Pancreas (tissue), 10 donors: ENCODE measurements at regions of chr16 and their contacts with region 1.

Region 1: DNA sequence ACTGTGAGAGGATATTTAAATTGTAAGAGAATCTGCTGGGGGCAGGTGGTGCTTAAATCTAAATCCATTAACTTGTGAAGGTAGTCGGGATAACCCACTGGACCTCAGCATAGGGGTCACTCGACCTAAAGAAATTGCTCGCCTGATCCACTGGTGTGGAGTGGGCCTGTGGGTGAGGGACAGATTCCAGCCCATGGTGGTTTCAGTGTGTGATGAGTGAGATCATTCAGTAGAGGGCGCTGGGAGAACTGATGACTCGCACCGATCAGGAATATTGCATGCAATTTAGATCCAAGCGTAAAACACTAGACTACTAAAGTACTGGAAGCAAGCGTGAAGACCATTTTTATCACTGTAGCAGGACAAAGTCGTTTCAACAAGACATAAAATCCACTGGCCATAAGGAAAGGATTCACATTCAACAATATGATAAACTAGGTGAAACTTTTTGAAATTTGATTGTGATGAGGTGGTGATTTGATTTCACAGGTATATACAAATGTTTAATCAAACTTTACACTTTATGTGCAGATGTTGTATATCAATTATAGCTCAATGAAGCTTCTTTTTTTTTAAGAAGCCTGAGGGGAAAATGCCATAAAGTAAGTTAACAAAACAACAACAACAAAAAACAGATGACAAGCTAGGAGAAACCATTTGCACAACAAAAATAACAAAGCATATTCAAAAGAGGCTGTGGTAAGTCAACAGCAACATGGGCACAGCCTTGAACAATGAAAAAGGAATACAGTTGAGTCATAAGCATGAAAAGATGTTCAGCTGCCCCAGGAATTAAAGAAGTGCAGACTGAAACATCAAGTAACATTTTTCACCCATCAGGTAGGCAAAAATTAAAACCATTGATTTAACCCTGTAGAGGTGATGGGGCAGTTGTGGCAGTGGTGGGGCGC is 7.5 kb upstream of the TMEM170A start:
- DNase-seq: peak in 4 of 6 donors; percentile 37 to 66 (median 41)
- ATAC-seq: peak; percentile 85 to 99 (median 98)
- H3K4me3 ChIP-seq: no peak overlapping the region
- H3K27ac ChIP-seq: no peak overlapping the region
- H3K4me1 ChIP-seq: no peaks in the 10 kb centered on the region
- H3K27me3 ChIP-seq: no peaks in the 10 kb centered on the region
- CTCF ChIP-seq: peak in 3 of 4 donors; percentile 41 to 62 (median 60)

Region 2: GRCh38 chr16:75519881-75520280 is 47.9 kb after region 1 on chr16:
- intact Hi-C with region 1: no loop called
- DNase-seq: no peak
- ATAC-seq: no peak
- H3K4me3 ChIP-seq: no peak overlapping the region
- H3K27ac ChIP-seq: no peak overlapping the region
- H3K4me1 ChIP-seq: no peaks in the 10 kb centered on the region
- H3K27me3 ChIP-seq: no peaks in the 10 kb centered on the region
- CTCF ChIP-seq: no peak

Region 3: GRCh38 chr16:75622761-75623605 is 151.0 kb after region 1 on chr16 and contains the start of gene ADAT1:
- intact Hi-C with region 1: loop called in 1 of 3 experiments (anchors 10 kb)
- DNase-seq: peak; percentile 96 to 98 (median 97)
- ATAC-seq: peak; percentile 96 to 98 (median 98)
- H3K4me3 ChIP-seq: peak within 1 kb of the TSS; percentile 59 to 73 (median 64)
- H3K27ac ChIP-seq: peak within 1 kb of the TSS; percentile 73 to 82 (median 81)
- H3K4me1 ChIP-seq: peaks cover 5 to 9% (median 7%) of the 10 kb centered on the region in 3 donors
- H3K27me3 ChIP-seq: no peaks in the 10 kb centered on the region
- CTCF ChIP-seq: no peak
- total RNA-seq, gene ADAT1: 9.2 to 20.5 (median 15.9) TPM

Region 4: DNA sequence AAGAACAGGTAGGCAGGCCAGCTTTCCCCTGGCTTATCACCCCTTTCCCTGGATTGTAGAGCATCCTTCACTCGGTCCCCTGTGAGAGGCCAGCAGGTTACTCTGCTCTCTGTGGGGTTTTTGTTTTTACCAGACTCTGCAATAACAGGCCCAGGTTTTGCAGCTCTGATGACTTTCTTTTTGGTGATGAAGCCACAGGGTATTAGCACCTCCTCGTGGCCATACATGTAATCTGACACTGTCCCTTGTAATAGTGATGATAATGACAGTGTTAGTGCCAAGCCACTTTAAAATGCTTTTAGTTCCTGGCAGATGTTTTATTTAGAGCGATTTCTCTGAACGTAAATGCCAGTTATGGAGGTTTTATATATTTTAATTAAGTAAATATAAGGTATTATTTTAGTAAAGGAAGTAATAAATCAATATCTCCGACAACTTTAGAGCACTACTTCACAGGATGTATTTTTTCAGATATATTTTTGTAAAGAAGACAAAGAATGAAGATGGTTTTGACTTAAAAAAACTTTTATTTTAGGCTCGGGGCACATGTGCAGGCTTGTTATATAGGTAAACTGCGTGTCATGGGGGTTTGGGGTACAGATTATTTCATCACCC is 292.3 kb after region 1 on chr16:
- intact Hi-C with region 1: loop called in 2 of 3 experiments (anchors 5 to 10 kb)
- DNase-seq: peak in 3 of 6 donors; percentile 34 to 74 (median 53)
- ATAC-seq: peak; percentile 94 to 100 (median 100)
- H3K4me3 ChIP-seq: no peak overlapping the region
- H3K27ac ChIP-seq: no peak overlapping the region
- H3K4me1 ChIP-seq: no peaks in the 10 kb centered on the region
- H3K27me3 ChIP-seq: no peaks in the 10 kb centered on the region
- CTCF ChIP-seq: peak; percentile 44 to 65 (median 58)